Dendritic cell treated with granulocyte-macrophage colony-stimulating factor and Interleukin-4, amounts not matched to agents 40 ng/mL and 50 ng/mL, for 4 days (primary cell): ENCODE measurements at regions of chr12 and their contacts with region 1.

Region 1: GRCh38 chr12:43758728-43759563 is at the starts of genes IRAK4 and PUS7L:
- H3K4me3 Mint-ChIP-seq: peak within 1 kb of the TSS; percentile 96
- H3K27ac Mint-ChIP-seq: peak within 1 kb of the TSS; percentile 99
- H3K4me1 Mint-ChIP-seq: peaks cover 53% of the 10 kb centered on the region
- H3K27me3 Mint-ChIP-seq: no peaks in the 10 kb centered on the region

Region 2: GRCh38 chr12:43805860-43806736 is 47.2 kb after region 1 on chr12 and contains the start of gene TWF1:
- intact Hi-C with region 1: loop called (anchors 1 kb)
- H3K4me3 Mint-ChIP-seq: peak within 1 kb of the TSS; percentile 100
- H3K27ac Mint-ChIP-seq: peak within 1 kb of the TSS; percentile 99
- H3K4me1 Mint-ChIP-seq: peaks cover 22% of the 10 kb centered on the region
- H3K27me3 Mint-ChIP-seq: peaks cover 5% of the 10 kb centered on the region